ENCODE measurements at regions of chr13 and their contacts with region 1.

Region 1: GRCh38 chr13:27980280-27980998 is 8.1 kb downstream of the URAD start:
- DNase-seq: no peak
- ATAC-seq: no peak
- H3K4me3 Mint-ChIP-seq: no peak overlapping the region
- H3K27ac Mint-ChIP-seq: no peak overlapping the region
- H3K4me1 Mint-ChIP-seq: peaks cover 17% of the 10 kb centered on the region
- H3K27me3 Mint-ChIP-seq: peaks cover 81% of the 10 kb centered on the region

Region 2: GRCh38 chr13:27968316-27969081 is 11.9 kb before region 1 on chr13:
- CTCF ChIA-PET with region 1: interaction called, 22 read pairs
- DNase-seq: no peak
- ATAC-seq: no peak
- H3K4me3 Mint-ChIP-seq: no peak overlapping the region
- H3K27ac Mint-ChIP-seq: no peak overlapping the region
- H3K4me1 Mint-ChIP-seq: peaks cover 5% of the 10 kb centered on the region
- H3K27me3 Mint-ChIP-seq: peaks cover 91% of the 10 kb centered on the region